ENCODE measurements at regions of chr5 and their contacts with region 1.

Region 1: DNA sequence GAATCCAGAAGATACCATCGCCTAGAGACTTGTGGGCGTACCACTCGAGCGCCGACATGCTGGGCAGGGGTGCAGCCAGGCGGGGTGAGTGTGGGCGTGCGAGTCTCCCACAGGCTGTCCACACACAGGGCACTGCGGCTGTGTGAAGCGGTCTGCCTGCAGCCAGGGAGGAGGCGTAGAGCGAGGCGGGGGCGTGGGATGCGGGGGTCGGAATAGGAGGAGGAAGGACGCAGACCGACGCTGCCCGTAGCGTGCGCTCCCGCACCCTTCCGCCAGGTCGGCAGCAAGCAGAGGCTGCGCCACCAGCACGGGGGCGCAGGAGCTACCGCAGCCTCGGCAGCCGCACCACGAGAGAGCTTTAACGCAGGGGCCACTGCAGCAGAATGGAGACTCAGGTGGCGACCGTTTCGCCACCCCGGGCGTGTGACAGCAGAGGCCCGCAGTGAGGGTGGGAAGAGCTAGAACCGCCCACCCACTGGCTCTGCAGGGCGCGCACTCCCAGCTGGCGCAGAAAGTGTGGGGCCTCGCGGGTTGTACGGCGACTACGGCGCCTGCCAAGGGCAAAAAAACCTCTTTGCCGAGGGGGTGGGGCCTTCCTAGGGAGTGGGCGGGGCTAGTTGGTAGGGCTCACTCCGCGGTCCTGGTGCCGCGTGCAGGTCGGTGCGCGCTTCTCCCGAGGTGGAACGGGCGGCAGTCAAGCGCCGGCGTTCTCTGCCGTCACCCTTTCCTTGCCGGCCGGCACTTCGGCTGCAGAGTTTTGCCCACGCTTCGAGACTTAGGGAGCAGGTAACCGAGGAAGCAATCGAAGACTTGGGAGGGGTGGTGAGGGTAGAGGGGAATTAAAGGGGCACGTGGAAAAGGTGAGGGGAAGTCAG is at the starts of genes MBLAC2 and POLR3G:
- DNase-seq: peak; percentile 96
- H3K4me3 Mint-ChIP-seq: peak within 1 kb of the TSS; percentile 92
- H3K27ac Mint-ChIP-seq: peak within 1 kb of the TSS; percentile 85
- H3K4me1 Mint-ChIP-seq: peaks cover 33% of the 10 kb centered on the region
- H3K27me3 Mint-ChIP-seq: no peaks in the 10 kb centered on the region
- total RNA-seq, gene MBLAC2: 2.4 to 2.8 TPM
- total RNA-seq, gene POLR3G: 10.1 to 13.6 TPM

Region 2: GRCh38 chr5:88883059-88883835 is 1591.2 kb before region 1 on chr5 and contains the start of gene MEF2C:
- CTCF ChIA-PET with region 1: no interaction called
- intact Hi-C with region 1: loop called (anchors 10 kb)
- DNase-seq: peak; percentile 12
- H3K4me3 Mint-ChIP-seq: peak within 1 kb of the TSS; percentile 76
- H3K27ac Mint-ChIP-seq: no peak within 1 kb of the TSS
- H3K4me1 Mint-ChIP-seq: peaks cover 20% of the 10 kb centered on the region
- H3K27me3 Mint-ChIP-seq: peaks cover 57% of the 10 kb centered on the region
- total RNA-seq, gene MEF2C: not detected

Region 3: GRCh38 chr5:90264689-90265544 is 209.6 kb before region 1 on chr5:
- CTCF ChIA-PET with region 1: no interaction called
- intact Hi-C with region 1: no loop called
- DNase-seq: peak; percentile 73
- H3K4me3 Mint-ChIP-seq: no peak overlapping the region
- H3K27ac Mint-ChIP-seq: no peak overlapping the region
- H3K4me1 Mint-ChIP-seq: peaks cover 2% of the 10 kb centered on the region
- H3K27me3 Mint-ChIP-seq: peaks cover 7% of the 10 kb centered on the region

Region 4: DNA sequence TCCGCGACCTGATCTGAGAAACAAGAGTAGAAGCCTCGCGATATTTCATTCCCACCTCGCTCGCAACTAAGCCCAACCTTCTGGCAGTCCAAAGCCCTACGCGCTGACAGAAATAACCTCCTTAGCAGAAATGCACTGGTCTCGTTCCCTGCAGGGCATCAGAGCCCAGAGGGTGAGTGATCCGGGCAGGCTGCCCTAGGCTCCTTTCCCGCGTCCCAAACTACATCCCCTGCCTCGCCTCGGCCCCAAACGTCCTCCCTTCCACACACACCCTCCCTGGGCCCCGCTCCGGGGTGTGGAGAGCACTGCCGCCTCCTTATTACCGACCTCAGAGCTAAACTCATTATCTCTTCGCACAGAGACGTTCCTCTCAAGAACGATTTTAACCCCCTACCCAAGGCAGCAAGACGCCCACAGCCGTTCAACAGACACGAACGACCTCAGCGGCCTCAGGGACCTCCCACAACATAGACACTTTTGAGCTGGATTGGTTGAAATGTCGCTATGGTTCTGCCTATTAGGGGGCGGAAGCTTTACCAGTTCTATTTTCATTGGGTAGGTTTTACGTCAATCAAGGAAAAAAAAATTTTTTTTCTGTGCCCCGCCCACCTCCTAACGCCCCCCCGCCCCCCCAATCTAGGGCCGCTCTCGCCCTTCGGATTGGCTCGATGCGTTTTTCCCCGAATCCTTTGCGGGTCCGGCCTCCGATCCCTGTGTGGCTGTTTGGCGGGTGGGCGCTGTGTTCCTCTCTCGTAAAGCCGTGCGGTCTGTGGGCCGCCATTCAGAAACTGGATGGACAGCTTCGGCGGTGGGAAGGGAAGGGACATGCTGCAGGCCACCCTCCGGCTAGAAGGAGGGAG is 64.9 kb before region 1 on chr5 and contains the start of gene CETN3:
- CTCF ChIA-PET with region 1: interaction called, 4 read pairs
- intact Hi-C with region 1: loop called (anchors 1 kb)
- DNase-seq: peak; percentile 93
- H3K4me3 Mint-ChIP-seq: no peak within 1 kb of the TSS
- H3K27ac Mint-ChIP-seq: no peak within 1 kb of the TSS
- H3K4me1 Mint-ChIP-seq: peaks cover 15% of the 10 kb centered on the region
- H3K27me3 Mint-ChIP-seq: no peaks in the 10 kb centered on the region
- total RNA-seq, gene CETN3: 41.9 to 45.3 TPM

Region 5: DNA sequence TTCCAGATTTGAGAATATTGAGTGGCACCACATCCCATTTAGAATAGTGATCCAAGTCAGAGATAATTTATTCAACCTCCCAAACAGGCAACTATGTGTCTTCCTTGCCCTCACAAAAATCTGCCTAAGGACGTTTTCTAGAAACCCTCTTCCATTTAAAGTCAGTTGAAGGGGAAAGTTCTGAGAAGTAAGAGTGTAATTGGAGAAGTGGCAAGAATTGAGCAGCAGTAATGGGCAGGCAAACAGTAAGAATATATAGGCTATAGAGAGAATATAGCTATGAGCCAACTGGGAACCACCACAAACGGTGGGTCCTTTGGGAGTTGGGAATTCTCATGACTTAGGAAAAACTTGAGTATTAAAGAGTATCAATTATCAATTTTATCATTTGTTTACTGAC is 33.8 kb before region 1 on chr5:
- CTCF ChIA-PET with region 1: interaction called, 5 read pairs
- intact Hi-C with region 1: loop called (anchors 1 kb)
- DNase-seq: no peak
- H3K4me3 Mint-ChIP-seq: no peak overlapping the region
- H3K27ac Mint-ChIP-seq: no peak overlapping the region
- H3K4me1 Mint-ChIP-seq: peaks cover 5% of the 10 kb centered on the region
- H3K27me3 Mint-ChIP-seq: peaks cover 4% of the 10 kb centered on the region

Region 6: GRCh38 chr5:90558344-90559192 is 84.1 kb after region 1 on chr5 and contains the start of gene ADGRV1:
- CTCF ChIA-PET with region 1: no interaction called
- intact Hi-C with region 1: no loop called
- DNase-seq: no peak
- H3K4me3 Mint-ChIP-seq: peak within 1 kb of the TSS; percentile 50
- H3K27ac Mint-ChIP-seq: no peak within 1 kb of the TSS
- H3K4me1 Mint-ChIP-seq: peaks cover 9% of the 10 kb centered on the region
- H3K27me3 Mint-ChIP-seq: peaks cover 54% of the 10 kb centered on the region
- total RNA-seq, gene ADGRV1: not detected

Measured in activated naive CD4-positive, alpha-beta T cell treated with anti-CD3 and anti-CD28 coated beads for 36 hours (primary cell).